Body of pancreas (tissue), 4 donors: ENCODE measurements at regions of chr17 and their contacts with region 1.

Region 1: GRCh38 chr17:32783602-32784001 is 93.3 kb downstream of the MYO1D start:
- DNase-seq: peak in 1 of 4 donors; percentile 21
- ATAC-seq: peak; percentile 68
- H3K4me3 ChIP-seq: no peak overlapping the region
- H3K27ac ChIP-seq: no peak overlapping the region
- H3K4me1 ChIP-seq: no peaks in the 10 kb centered on the region
- H3K27me3 ChIP-seq: no peaks in the 10 kb centered on the region
- CTCF ChIP-seq: peak; percentile 41 to 91 (median 76)
- POLR2A ChIP-seq: no peak

Region 2: GRCh38 chr17:32877164-32877764 is 93.7 kb after region 1 on chr17:
- intact Hi-C with region 1: loop called (anchors 10 kb)
- DNase-seq: peak; percentile 93 to 97 (median 95)
- ATAC-seq: peak; percentile 96
- H3K4me3 ChIP-seq: no peak overlapping the region
- H3K27ac ChIP-seq: peak overlapping the region; percentile 94 to 98 (median 96)
- H3K4me1 ChIP-seq: peaks cover 9% of the 10 kb centered on the region
- H3K27me3 ChIP-seq: no peaks in the 10 kb centered on the region
- CTCF ChIP-seq: peak; percentile 69 to 100 (median 93)
- POLR2A ChIP-seq: no peak

Region 3: GRCh38 chr17:32909787-32910369 is 126.3 kb after region 1 on chr17:
- intact Hi-C with region 1: loop called (anchors 10 kb)
- DNase-seq: peak; percentile 90 to 94 (median 92)
- ATAC-seq: peak; percentile 80
- H3K4me3 ChIP-seq: no peak overlapping the region
- H3K27ac ChIP-seq: peak overlapping the region in 3 of 4 donors; percentile 40 to 57 (median 55)
- H3K4me1 ChIP-seq: peaks cover 34% of the 10 kb centered on the region
- H3K27me3 ChIP-seq: no peaks in the 10 kb centered on the region
- CTCF ChIP-seq: peak; percentile 73 to 94 (median 91)
- POLR2A ChIP-seq: no peak